ENCODE measurements at regions of chr15 and their contacts with region 1.

Region 1: GRCh38 chr15:77993374-77993911 is 84.1 kb downstream of the TBC1D2B start:
- DNase-seq: no peak
- ATAC-seq: no peak
- H3K4me3 ChIP-seq: no peak overlapping the region
- H3K27ac ChIP-seq: peak overlapping the region; percentile 3 to 90 (median 82)
- H3K4me1 ChIP-seq: peaks cover 28 to 72% (median 55%) of the 10 kb centered on the region in 9 donors
- H3K27me3 ChIP-seq: no peaks in the 10 kb centered on the region
- CTCF ChIP-seq: no peak

Region 2: GRCh38 chr15:77974098-77974414 is 19.4 kb before region 1 on chr15:
- intact Hi-C with region 1: loop called in 2 of 10 experiments (anchors 1 to 2 kb)
- DNase-seq: peak; percentile 64 to 74
- ATAC-seq: peak; percentile 55 to 82 (median 68)
- H3K4me3 ChIP-seq: no peak overlapping the region
- H3K27ac ChIP-seq: peak overlapping the region in 8 of 10 donors; percentile 25 to 75 (median 68)
- H3K4me1 ChIP-seq: peaks cover 8 to 31% (median 21%) of the 10 kb centered on the region in 9 donors
- H3K27me3 ChIP-seq: no peaks in the 10 kb centered on the region
- CTCF ChIP-seq: no peak

Region 3: DNA sequence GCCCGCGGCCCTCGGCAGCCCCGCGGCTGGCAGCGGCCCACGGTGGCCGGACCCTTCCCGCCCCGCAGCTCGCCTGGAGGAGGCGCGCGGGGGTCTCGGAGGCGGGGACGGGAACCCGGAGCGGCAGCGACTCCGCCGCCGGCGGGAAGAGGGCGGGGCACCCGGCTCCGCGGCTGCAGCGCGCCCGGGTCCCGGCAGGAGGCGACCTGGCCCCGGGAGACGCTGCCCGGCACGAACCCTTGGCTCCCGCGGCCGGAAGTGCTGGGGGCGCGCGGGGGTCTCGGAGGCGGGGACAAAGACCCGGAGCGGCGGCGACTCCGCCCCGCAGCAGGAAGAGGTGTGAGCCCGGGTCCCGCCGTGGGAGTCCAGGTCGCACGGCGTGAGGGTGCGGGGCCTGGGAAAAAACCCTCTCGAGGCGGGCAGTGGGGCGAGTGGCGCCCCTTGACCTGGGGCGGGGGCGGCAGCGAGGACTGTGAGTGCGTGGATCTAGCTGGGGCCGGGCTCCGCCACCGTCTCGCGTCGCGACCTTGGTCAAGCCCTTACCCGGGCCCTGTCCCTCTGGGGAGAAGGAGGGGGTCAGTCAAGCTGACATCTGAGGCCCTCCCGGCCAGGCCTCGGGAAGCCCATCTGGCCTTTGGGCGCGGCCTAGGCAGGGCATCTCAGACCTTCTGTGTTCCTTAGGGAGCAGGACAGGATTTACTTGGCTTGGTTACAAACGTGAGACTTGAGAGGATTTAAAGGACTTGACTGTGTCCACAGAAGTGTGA is 138.0 kb after region 1 on chr15 and contains the start of gene CIB2:
- intact Hi-C with region 1: no loop called
- DNase-seq: peak; percentile 60 to 81
- ATAC-seq: peak; percentile 86 to 95 (median 90)
- H3K4me3 ChIP-seq: peak within 1 kb of the TSS; percentile 56 to 95 (median 80)
- H3K27ac ChIP-seq: peak within 1 kb of the TSS; percentile 71 to 91 (median 84)
- H3K4me1 ChIP-seq: peaks cover 0 to 13% (median 10%) of the 10 kb centered on the region in 9 donors
- H3K27me3 ChIP-seq: no peaks in the 10 kb centered on the region
- CTCF ChIP-seq: peak; percentile 63 to 94 (median 85)
- total RNA-seq, gene CIB2: 4.0 to 32.3 (median 17.1) TPM